HCT116 (cell line): ENCODE measurements at regions of chr19 and their contacts with region 1.

Region 1: DNA sequence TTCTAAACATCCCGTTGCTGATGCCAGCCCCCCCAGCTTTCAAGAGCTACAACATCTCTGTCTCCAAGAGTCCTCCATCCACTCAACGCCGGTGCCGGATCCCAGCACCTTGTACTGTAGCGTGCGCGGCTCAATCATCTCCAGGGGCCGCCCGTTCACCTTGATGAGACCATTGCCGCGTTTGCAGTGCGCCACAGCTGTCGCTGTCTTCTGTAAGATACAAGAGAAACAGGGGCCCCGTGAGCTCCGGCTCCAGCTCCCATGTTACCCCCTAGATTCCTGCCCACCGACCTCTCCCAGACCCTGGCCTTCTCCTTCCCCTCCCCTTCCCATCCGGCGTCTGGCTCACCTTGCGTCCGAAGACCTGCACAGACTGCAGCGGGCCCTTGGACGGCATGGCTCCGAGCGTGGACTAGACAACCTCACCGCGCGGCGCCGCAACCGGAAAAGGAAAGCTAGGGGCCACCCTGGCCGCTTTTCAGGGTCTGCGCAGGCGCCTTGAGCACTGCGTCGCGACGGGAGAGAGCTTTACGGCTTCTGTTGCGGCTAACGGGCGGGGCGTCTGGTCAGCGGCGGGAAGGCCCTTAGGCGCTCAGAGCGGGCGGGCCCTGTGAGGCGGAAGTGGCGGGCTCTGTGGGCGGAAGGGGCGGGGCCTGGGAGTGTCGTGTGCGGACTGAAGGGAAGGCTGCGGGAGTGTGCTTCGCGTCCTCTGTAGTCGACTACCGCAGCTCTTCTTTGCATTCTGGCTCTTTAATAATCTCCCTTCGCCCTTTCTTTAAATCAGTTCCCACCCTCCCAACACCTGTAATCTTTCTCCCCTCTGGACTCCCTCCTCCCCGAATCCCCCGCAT is at the start of gene RPS16:
- DNase-seq: peak; percentile 92
- ATAC-seq: peak; percentile 81
- H3K4me3 ChIP-seq: peak within 1 kb of the TSS; percentile 98 to 99
- H3K27ac ChIP-seq: peak within 1 kb of the TSS; percentile 84
- H3K4me1 ChIP-seq: peaks cover 34 to 72% of the 10 kb centered on the region in 2 experiments
- H3K27me3 ChIP-seq: no peaks in the 10 kb centered on the region
- CTCF ChIP-seq: no peak
- POLR2A ChIP-seq: peak; percentile 96
- RAD21 ChIP-seq: no peak
- total RNA-seq, gene RPS16: 3,365 TPM

Region 2: GRCh38 chr19:39282021-39282420 is 153.7 kb before region 1 on chr19:
- CTCF ChIA-PET with region 1: no interaction called
- POLR2A ChIA-PET with region 1: no interaction called
- RAD21 ChIA-PET with region 1: no interaction called
- intact Hi-C with region 1: no loop called
- DNase-seq: no peak
- ATAC-seq: no peak
- H3K4me3 ChIP-seq: no peak overlapping the region
- H3K27ac ChIP-seq: no peak overlapping the region
- H3K4me1 ChIP-seq: no peaks in the 10 kb centered on the region
- H3K27me3 ChIP-seq: no peaks in the 10 kb centered on the region
- CTCF ChIP-seq: no peak
- POLR2A ChIP-seq: no peak
- RAD21 ChIP-seq: no peak

Region 3: GRCh38 chr19:39390755-39391592 is 44.8 kb before region 1 on chr19 and contains the starts of genes MED29 and PAF1:
- CTCF ChIA-PET with region 1: interaction called, 3 read pairs
- POLR2A ChIA-PET with region 1: interaction called, 25 read pairs
- RAD21 ChIA-PET with region 1: no interaction called
- intact Hi-C with region 1: loop called (anchors 2 kb)
- DNase-seq: peak; percentile 99
- ATAC-seq: peak; percentile 94
- H3K4me3 ChIP-seq: peak within 1 kb of the TSS; percentile 91 to 100
- H3K27ac ChIP-seq: peak within 1 kb of the TSS; percentile 96
- H3K4me1 ChIP-seq: peaks cover 14% of the 10 kb centered on the region in 2 experiments
- H3K27me3 ChIP-seq: no peaks in the 10 kb centered on the region
- CTCF ChIP-seq: no peak
- POLR2A ChIP-seq: peak; percentile 97
- RAD21 ChIP-seq: no peak
- total RNA-seq, gene MED29: 32.0 TPM
- total RNA-seq, gene PAF1: 53.5 TPM

Region 4: DNA sequence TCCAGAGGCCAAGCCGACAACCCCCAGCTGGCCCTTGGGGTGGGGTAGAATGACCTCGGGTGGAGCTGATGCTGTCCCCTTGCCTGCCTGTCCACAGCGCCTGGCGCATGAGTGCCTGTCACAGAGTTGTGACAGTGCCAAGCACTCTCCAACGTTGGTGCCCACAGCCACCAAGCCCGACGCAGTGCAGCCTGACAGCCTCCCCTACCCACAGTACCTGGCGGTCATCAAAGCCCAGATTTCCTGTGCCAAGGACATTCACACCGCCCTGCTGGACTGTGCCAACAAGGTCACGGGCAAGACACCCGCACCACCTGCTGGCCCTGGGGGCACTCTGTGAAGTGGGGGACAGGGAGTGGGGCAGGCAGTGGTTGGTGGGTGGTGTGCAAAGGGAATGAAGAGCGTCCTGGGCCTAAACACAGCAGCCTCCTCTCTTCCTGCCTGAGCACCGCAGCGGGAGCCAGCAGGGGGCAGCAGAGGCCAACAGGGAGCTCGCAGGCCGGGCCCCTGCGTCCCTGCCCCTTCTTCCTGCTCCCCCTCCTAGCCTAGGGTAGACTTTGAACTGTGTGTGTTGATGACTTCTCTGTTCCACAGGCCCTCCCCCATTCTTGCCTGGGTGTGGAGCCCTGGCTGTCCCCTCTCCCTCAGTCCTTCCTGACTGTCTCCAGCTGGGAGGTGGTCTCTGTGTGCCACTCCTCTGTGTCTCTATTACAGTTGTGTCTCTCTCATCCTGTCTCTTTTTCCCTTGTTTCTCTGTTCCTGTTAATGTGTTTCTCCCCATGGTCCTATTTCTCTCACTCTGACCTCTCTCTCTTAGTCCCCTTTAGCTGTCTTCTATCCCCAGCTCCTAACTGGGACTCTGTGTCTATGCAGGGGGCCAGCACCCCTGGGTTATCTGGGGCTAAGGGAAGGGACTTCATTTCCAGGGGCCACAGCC is 38.1 kb before region 1 on chr19:
- CTCF ChIA-PET with region 1: interaction called, 5 read pairs
- POLR2A ChIA-PET with region 1: interaction called, 35 read pairs
- RAD21 ChIA-PET with region 1: no interaction called
- intact Hi-C with region 1: no loop called
- DNase-seq: peak; percentile 72
- ATAC-seq: peak; percentile 74
- H3K4me3 ChIP-seq: peak overlapping the region in 1 of 2 experiments; percentile 3; a peak in 2 of 4 replicates
- H3K27ac ChIP-seq: peak overlapping the region; percentile 91
- H3K4me1 ChIP-seq: peaks cover 36 to 58% of the 10 kb centered on the region in 2 experiments
- H3K27me3 ChIP-seq: no peaks in the 10 kb centered on the region
- CTCF ChIP-seq: peak in 2 of 3 experiments; percentile 91 to 98; a peak in 4 of 6 replicates
- POLR2A ChIP-seq: no peak
- RAD21 ChIP-seq: no peak

Region 5: GRCh38 chr19:39406656-39407393 is 28.9 kb before region 1 on chr19 and contains the start of gene ZFP36:
- CTCF ChIA-PET with region 1: interaction called, 5 read pairs
- POLR2A ChIA-PET with region 1: interaction called, 19 read pairs
- RAD21 ChIA-PET with region 1: no interaction called
- intact Hi-C with region 1: no loop called
- DNase-seq: peak; percentile 68
- ATAC-seq: peak; percentile 31
- H3K4me3 ChIP-seq: peak within 1 kb of the TSS; percentile 90 to 98
- H3K27ac ChIP-seq: peak within 1 kb of the TSS; percentile 100
- H3K4me1 ChIP-seq: peaks cover 52 to 88% of the 10 kb centered on the region in 2 experiments
- H3K27me3 ChIP-seq: no peaks in the 10 kb centered on the region
- CTCF ChIP-seq: no peak
- POLR2A ChIP-seq: peak; percentile 99
- RAD21 ChIP-seq: no peak
- total RNA-seq, gene ZFP36: 131 TPM

Region 6: GRCh38 chr19:39420769-39421168 is 15.0 kb before region 1 on chr19:
- CTCF ChIA-PET with region 1: no interaction called
- POLR2A ChIA-PET with region 1: interaction called, 33 read pairs
- RAD21 ChIA-PET with region 1: no interaction called
- intact Hi-C with region 1: no loop called
- DNase-seq: no peak
- ATAC-seq: no peak
- H3K4me3 ChIP-seq: no peak overlapping the region
- H3K27ac ChIP-seq: no peak overlapping the region
- H3K4me1 ChIP-seq: peaks cover 0 to 4% of the 10 kb centered on the region in 2 experiments; a peak in 2 of 4 replicates
- H3K27me3 ChIP-seq: no peaks in the 10 kb centered on the region
- CTCF ChIP-seq: no peak
- POLR2A ChIP-seq: no peak
- RAD21 ChIP-seq: no peak